ENCODE measurements at regions of chr18 and their contacts with region 1.

Region 1: DNA sequence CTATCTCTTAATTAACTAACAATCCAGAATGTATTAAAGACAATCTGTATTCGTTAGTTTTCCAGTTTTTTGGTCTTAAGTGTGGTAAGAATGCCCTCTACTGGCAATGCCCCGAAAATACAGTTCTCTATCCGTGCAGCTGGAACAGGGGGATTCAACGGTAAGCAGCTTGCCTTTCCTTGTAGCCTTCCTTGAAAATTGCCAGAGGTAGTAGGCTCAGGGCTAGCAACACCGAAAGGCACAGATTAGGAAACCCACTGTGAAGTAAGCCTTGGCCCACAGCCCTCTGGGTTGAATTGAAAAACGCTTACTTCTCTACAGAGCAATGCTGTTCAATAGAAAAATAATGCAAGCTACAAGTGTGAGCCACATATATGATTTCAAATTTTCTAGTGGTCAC is 17.1 kb upstream of the VPS4B start:
- DNase-seq: peak in 4 of 5 donors; percentile 54 to 58 (median 56)
- H3K4me3 ChIP-seq: no peak overlapping the region
- H3K4me3 Mint-ChIP-seq: peak overlapping the region in 1 of 8 donors; percentile 32
- H3K27ac ChIP-seq: no peak overlapping the region
- H3K27ac Mint-ChIP-seq: no peak overlapping the region
- H3K4me1 ChIP-seq: no peaks in the 10 kb centered on the region
- H3K4me1 Mint-ChIP-seq: peaks cover 0 to 3% (median 2%) of the 10 kb centered on the region in 4 donors
- H3K27me3 ChIP-seq: peaks cover 3% of the 10 kb centered on the region
- H3K27me3 Mint-ChIP-seq: peaks cover 0 to 9% of the 10 kb centered on the region in 2 donors

Region 2: DNA sequence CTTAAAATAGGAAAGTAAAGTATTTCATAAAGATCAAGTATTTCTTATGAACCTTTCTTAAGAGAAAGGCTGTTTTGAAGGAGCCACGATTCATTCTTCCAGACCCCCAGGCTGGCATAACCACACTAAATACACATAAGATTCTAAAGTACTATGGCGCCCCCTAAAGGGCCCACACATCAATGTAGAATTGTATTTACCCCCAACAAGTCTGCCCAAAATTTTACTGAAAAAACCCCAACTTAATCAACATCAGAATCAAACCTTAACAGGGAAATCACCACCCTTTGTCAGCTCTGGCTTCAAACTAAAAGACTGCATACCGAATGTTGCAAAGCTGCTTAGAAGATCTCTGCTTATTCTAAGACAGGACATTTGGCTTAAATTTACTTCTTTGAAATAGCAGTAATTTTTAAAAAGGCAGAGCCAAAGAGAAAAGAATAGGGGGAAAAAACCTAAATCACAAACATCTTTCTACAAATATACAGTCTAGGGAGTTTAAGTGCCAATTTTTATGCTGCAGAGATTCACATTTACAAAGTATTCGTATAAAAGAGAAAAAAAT is 99.3 kb before region 1 on chr18:
- CTCF ChIA-PET with region 1: interaction called, 193 read pairs
- POLR2A ChIA-PET with region 1: no interaction called
- intact Hi-C with region 1: loop called (anchors 1 kb)
- DNase-seq: peak in 4 of 5 donors; percentile 43 to 51 (median 49)
- H3K4me3 ChIP-seq: no peak overlapping the region
- H3K4me3 Mint-ChIP-seq: no peak overlapping the region
- H3K27ac ChIP-seq: no peak overlapping the region
- H3K27ac Mint-ChIP-seq: peak overlapping the region in 3 of 7 donors; percentile 43 to 69 (median 69)
- H3K4me1 ChIP-seq: no peaks in the 10 kb centered on the region
- H3K4me1 Mint-ChIP-seq: peaks cover 0 to 7% (median 1%) of the 10 kb centered on the region in 4 donors
- H3K27me3 ChIP-seq: no peaks in the 10 kb centered on the region
- H3K27me3 Mint-ChIP-seq: no peaks in the 10 kb centered on the region

Region 3: GRCh38 chr18:63376538-63376937 is 62.8 kb before region 1 on chr18:
- CTCF ChIA-PET with region 1: no interaction called
- POLR2A ChIA-PET with region 1: no interaction called
- intact Hi-C with region 1: no loop called
- DNase-seq: no peak
- H3K4me3 ChIP-seq: no peak overlapping the region
- H3K4me3 Mint-ChIP-seq: no peak overlapping the region
- H3K27ac ChIP-seq: no peak overlapping the region
- H3K27ac Mint-ChIP-seq: no peak overlapping the region
- H3K4me1 ChIP-seq: peaks cover 11% of the 10 kb centered on the region
- H3K4me1 Mint-ChIP-seq: peaks cover 14 to 24% (median 17%) of the 10 kb centered on the region in 4 donors
- H3K27me3 ChIP-seq: no peaks in the 10 kb centered on the region
- H3K27me3 Mint-ChIP-seq: no peaks in the 10 kb centered on the region

Region 4: DNA sequence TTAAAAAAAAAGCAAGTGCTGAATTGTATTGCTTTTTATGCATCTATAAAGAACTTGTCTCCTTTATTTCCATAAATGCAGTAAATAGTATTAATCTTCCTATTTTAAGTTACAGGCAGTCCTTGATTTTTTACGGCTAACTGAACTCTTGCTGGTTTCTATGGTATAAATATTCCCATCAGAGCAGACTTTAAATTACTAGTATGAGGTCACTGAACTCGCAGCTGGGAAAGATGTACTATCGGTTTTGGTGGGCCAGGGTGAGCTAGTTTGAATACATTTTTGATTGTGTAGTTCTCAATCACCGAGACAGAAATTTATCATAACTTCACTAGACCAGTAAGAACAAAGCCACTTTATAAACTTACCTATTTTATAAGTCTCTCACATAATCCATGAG is 51.5 kb before region 1 on chr18:
- CTCF ChIA-PET with region 1: no interaction called
- POLR2A ChIA-PET with region 1: no interaction called
- intact Hi-C with region 1: no loop called
- DNase-seq: no peak
- H3K4me3 ChIP-seq: no peak overlapping the region
- H3K4me3 Mint-ChIP-seq: no peak overlapping the region
- H3K27ac ChIP-seq: no peak overlapping the region
- H3K27ac Mint-ChIP-seq: peak overlapping the region in 1 of 7 donors; percentile 32
- H3K4me1 ChIP-seq: no peaks in the 10 kb centered on the region
- H3K4me1 Mint-ChIP-seq: no peaks in the 10 kb centered on the region
- H3K27me3 ChIP-seq: no peaks in the 10 kb centered on the region
- H3K27me3 Mint-ChIP-seq: no peaks in the 10 kb centered on the region